Colonic mucosa (tissue), 4 donors: ENCODE measurements at regions of chr1 and their contacts with region 1.

Region 1: GRCh38 chr1:202329891-202330290 is 11.8 kb downstream of the UBE2T start:
- DNase-seq: no peak
- H3K4me3 ChIP-seq: no peak overlapping the region
- H3K27ac ChIP-seq: no peak overlapping the region
- H3K4me1 ChIP-seq: no peaks in the 10 kb centered on the region
- H3K27me3 ChIP-seq: no peaks in the 10 kb centered on the region
- CTCF ChIP-seq: no peak

Region 2: GRCh38 chr1:202315576-202316168 is 14.2 kb before region 1 on chr1:
- intact Hi-C with region 1: no loop called
- DNase-seq: peak; percentile 82
- H3K4me3 ChIP-seq: no peak overlapping the region
- H3K27ac ChIP-seq: no peak overlapping the region
- H3K4me1 ChIP-seq: no peaks in the 10 kb centered on the region
- H3K27me3 ChIP-seq: no peaks in the 10 kb centered on the region
- CTCF ChIP-seq: peak; percentile 81

Region 3: DNA sequence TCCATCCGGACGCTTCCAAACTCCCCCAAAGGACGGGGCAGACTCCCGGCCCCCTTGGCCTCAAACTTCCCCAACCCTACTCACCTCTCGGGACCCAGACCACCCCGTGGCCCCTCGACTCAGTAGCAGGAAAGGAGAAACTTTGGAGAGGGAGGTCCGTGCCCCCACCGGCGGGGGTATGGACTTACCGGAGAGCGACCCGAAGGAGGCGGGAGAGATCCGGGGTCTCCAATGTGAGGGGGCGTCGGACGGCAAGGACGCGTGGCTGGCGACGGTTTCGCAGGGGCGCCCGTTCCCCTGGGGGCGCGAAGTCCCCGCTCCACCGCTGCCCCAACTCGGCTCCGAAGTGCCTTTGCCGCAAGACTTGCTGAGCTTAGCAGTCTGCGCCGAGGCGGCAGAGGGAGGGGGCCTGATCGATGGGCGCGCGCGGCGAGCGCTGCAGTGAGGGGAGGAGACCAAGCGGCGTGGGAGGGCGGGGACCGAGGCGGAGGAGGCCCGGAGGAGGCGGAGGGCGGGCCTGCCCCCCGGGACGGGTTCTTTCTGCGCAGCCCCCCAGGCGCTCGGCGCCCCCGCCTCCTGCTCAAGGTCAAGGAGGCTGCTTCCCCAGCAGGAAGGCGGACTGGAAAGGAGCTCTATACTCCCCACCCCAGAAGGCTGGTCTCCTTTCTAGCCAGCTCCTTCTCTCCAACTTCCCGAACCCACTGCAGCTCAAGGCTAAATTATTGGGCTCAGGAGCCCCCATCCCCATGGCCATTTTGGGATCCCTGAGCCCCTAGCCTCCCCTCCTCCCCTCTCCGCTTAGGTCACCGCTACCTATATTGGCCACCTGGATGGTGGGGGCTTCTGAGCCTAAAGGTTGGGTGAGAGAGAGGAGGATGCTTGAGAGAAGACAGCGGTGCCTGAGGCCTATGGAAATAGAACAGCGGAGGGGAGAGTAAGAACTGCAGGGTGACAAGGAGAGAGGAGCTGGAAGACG is 380.5 kb after region 1 on chr1 and contains the start of gene SYT2:
- intact Hi-C with region 1: loop called (anchors 10 kb)
- DNase-seq: peak; percentile 21
- H3K4me3 ChIP-seq: peak within 1 kb of the TSS; percentile 13
- H3K27ac ChIP-seq: no peak within 1 kb of the TSS
- H3K4me1 ChIP-seq: peaks cover 7% of the 10 kb centered on the region
- H3K27me3 ChIP-seq: peaks cover 34% of the 10 kb centered on the region
- CTCF ChIP-seq: no peak
- total RNA-seq, gene SYT2: 0.15 to 0.19 TPM